ENCODE measurements at regions of chr18 and their contacts with region 1.

Region 1: DNA sequence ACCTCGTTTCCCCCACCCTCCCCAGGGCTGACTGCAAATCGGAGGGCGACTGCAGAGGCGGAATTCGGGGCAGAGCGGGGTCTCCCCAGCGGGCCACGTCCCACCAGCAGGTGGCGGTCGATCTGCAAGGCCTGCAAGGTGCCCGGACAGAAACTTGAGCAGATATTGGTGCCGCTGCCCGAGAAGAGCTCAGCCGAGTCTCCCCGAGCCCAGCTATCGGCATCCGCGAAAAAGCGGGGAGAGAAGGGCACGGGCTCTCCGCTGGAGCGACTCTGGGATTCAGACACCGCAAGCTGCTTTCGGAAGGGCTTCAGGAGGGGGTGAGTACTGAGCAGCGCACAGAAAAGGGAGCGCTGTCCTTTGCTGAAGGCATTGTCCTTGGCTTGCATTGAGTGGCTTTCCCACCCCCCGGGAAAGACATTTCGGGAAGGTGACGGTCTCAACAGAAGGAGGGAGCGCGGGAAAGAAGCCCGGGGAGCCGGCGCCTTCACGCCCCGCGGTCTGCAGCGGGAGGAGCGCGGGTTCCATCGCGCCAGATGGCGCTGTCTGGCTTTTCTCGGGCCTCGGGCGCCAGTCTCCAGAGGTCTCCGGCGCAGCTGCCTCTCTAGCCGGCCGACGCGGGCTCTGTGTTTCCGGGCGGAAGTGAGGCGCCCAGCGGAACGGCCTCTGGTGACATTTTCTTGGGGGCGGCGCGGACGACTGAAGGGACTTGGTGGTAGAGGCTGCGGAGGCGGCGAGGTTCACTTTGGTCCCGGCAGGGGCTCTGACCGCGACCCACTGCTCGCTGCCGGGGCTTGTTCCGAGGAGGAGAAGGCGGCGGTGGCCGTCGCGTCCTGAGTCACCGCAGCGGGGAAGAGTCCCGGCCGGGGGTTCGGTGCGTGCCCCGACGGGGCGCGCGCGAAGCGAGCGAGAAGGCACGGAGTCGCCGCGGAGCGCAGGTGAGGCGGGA is 69.5 kb downstream of the HAUS1 start:
- DNase-seq: peak; percentile 91
- H3K4me3 Mint-ChIP-seq: peak overlapping the region; percentile 97
- H3K27ac Mint-ChIP-seq: peak overlapping the region; percentile 100
- H3K4me1 Mint-ChIP-seq: peaks cover 51% of the 10 kb centered on the region
- H3K27me3 Mint-ChIP-seq: no peaks in the 10 kb centered on the region

Region 2: GRCh38 chr18:46097801-46098615 is 75.7 kb before region 1 on chr18 and contains the start of gene ATP5F1A:
- intact Hi-C with region 1: loop called (anchors 1 kb)
- DNase-seq: peak; percentile 76
- H3K4me3 Mint-ChIP-seq: peak within 1 kb of the TSS; percentile 99
- H3K27ac Mint-ChIP-seq: peak within 1 kb of the TSS; percentile 99
- H3K4me1 Mint-ChIP-seq: peaks cover 23% of the 10 kb centered on the region
- H3K27me3 Mint-ChIP-seq: peaks cover 3% of the 10 kb centered on the region
- total RNA-seq, gene ATP5F1A: 412 and 420 TPM in 2 replicates

Region 3: DNA sequence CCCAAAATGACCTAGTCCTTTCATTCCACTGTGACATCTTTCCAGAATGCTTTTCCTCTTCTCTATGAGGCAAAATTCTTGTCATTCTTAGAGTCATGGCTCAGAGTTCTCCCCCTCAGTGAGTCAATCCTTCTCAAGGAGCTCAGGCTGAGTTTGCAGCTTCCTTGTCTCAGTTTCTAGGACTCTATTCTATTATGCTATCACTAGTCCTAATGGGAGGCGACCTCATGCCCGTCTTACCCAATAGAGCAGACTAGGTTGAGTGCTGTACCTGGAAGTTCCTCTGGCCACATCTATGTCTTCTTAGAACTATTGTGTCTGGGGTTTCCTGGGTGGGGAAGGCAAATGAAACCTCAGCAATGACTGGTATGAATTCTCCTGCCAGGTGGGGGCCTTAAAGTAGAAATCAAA is 18.0 kb before region 1 on chr18:
- intact Hi-C with region 1: loop called (anchors 1 kb)
- DNase-seq: peak; percentile 56
- H3K4me3 Mint-ChIP-seq: peak overlapping the region; percentile 73
- H3K27ac Mint-ChIP-seq: peak overlapping the region; percentile 92
- H3K4me1 Mint-ChIP-seq: peaks cover 58% of the 10 kb centered on the region
- H3K27me3 Mint-ChIP-seq: peaks cover 4% of the 10 kb centered on the region

Region 4: DNA sequence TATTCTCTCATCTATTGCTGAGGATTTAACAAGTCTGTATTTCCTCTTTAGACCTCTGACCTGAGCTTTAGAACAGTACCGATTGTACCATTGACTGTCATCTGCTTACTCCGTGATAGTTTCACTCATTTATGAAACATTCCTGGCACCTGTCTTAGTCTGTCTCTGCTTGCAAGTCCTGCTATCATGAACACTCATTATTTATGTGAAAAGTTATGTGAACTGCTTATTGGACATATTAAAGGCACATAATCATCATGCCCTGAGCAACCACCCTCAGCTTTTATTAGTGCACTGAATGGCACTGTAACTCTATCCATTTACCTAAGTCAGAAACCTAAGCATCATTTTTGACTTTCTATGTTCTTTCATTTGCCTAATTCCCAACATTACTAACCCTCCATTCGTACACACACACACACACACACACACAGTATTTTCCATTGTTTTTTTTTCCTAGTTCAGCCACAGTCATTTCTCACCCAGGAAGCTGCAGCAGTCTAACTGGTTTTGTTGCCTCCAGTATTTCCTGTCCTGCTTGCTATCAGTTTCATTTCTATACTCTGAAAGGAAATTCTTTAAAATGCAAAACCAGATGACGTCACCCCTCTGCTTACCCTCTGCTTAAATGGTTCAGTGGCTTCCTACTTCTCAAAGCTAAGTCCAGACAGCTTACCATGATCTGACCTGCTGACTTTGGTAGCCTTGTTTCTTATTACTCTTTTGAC is 76.6 kb after region 1 on chr18:
- intact Hi-C with region 1: loop called (anchors 1 kb)
- DNase-seq: peak; percentile 71
- H3K4me3 Mint-ChIP-seq: peak overlapping the region; percentile 28
- H3K27ac Mint-ChIP-seq: peak overlapping the region; percentile 92
- H3K4me1 Mint-ChIP-seq: peaks cover 75% of the 10 kb centered on the region
- H3K27me3 Mint-ChIP-seq: no peaks in the 10 kb centered on the region

Region 5: GRCh38 chr18:46481048-46481846 is 307.6 kb after region 1 on chr18:
- intact Hi-C with region 1: loop called (anchors 1 kb)
- DNase-seq: peak; percentile 27
- H3K4me3 Mint-ChIP-seq: no peak overlapping the region
- H3K27ac Mint-ChIP-seq: no peak overlapping the region
- H3K4me1 Mint-ChIP-seq: no peaks in the 10 kb centered on the region
- H3K27me3 Mint-ChIP-seq: peaks cover 13% of the 10 kb centered on the region

Measured in activated T-helper 1 cell treated with anti-CD3 and anti-CD28 coated beads, Interleukin-12 subunit alpha, Interleukin-12 subunit beta, Interleukin-2, Interleukin-4 antibody, amounts not matched to agents 30 ng/mL and 10 ng/mL and 1 ng/mL, durations not matched to agents 14 hours and 24 hours and 36 hours (primary cell).